Dendritic cell treated with granulocyte-macrophage colony-stimulating factor and Interleukin-4, amounts not matched to agents 40 ng/mL and 50 ng/mL, for 4 days (primary cell): ENCODE measurements at regions of chr6 and their contacts with region 1.

Region 1: GRCh38 chr6:28683944-28684538 is 158.4 kb downstream of the GPX5 start:
- H3K4me3 Mint-ChIP-seq: no peak overlapping the region
- H3K27ac Mint-ChIP-seq: no peak overlapping the region
- H3K4me1 Mint-ChIP-seq: no peaks in the 10 kb centered on the region
- H3K27me3 Mint-ChIP-seq: peaks cover 61% of the 10 kb centered on the region

Region 2: GRCh38 chr6:28707387-28708282 is 23.6 kb after region 1 on chr6:
- intact Hi-C with region 1: no loop called
- H3K4me3 Mint-ChIP-seq: no peak overlapping the region
- H3K27ac Mint-ChIP-seq: no peak overlapping the region
- H3K4me1 Mint-ChIP-seq: peaks cover 6% of the 10 kb centered on the region
- H3K27me3 Mint-ChIP-seq: peaks cover 47% of the 10 kb centered on the region

Region 3: DNA sequence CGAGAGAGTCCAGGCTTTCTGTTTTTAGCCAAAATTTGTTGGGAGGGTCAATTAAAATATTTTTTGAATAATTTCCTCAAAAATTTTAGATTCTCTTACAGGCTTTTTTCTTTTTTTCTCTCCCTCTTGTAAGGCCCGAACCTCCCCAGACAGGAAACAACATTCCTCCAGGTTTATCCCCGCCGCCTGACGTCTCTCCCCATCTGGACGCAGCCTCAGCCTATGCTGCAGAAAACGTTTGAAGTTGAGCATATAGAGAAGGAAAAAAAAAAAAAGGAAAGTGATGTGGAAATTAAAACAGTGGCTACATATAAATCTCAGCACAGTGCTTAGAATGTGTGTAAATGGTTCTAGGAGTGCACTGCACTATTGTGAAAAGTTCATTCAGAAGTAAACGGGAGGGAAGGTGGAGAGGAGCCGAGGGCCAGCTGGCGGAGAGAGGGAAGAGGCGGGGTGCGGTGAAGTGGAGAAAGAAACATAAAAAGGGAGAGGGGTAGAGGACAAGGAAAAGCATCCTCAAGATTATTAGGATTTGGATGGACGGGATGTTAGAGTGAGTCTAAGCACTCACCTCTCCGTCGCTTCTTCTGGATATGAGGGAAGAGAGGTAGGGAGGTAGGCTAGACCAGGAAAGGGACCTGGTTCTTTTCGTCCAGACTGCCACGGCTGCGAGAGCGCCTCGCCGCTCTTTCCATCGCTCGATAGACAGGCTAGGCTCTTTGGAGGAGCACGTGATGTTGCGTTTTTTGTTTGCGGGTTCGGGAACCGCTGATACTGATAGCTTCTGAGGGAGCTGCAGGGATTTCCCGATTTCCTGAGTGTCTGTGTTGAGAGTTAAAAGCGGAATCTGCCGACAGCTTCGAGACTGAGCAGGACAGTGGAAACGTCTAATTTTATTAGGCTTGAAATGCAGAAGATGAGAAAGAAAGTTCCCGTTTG is 141.0 kb after region 1 on chr6:
- intact Hi-C with region 1: no loop called
- H3K4me3 Mint-ChIP-seq: no peak overlapping the region
- H3K27ac Mint-ChIP-seq: no peak overlapping the region
- H3K4me1 Mint-ChIP-seq: peaks cover 9% of the 10 kb centered on the region
- H3K27me3 Mint-ChIP-seq: peaks cover 82% of the 10 kb centered on the region

Region 4: GRCh38 chr6:28838634-28839442 is 154.8 kb after region 1 on chr6:
- intact Hi-C with region 1: loop called (anchors 1 kb)
- H3K4me3 Mint-ChIP-seq: peak overlapping the region; percentile 83
- H3K27ac Mint-ChIP-seq: peak overlapping the region; percentile 70
- H3K4me1 Mint-ChIP-seq: peaks cover 22% of the 10 kb centered on the region
- H3K27me3 Mint-ChIP-seq: peaks cover 79% of the 10 kb centered on the region

Region 5: DNA sequence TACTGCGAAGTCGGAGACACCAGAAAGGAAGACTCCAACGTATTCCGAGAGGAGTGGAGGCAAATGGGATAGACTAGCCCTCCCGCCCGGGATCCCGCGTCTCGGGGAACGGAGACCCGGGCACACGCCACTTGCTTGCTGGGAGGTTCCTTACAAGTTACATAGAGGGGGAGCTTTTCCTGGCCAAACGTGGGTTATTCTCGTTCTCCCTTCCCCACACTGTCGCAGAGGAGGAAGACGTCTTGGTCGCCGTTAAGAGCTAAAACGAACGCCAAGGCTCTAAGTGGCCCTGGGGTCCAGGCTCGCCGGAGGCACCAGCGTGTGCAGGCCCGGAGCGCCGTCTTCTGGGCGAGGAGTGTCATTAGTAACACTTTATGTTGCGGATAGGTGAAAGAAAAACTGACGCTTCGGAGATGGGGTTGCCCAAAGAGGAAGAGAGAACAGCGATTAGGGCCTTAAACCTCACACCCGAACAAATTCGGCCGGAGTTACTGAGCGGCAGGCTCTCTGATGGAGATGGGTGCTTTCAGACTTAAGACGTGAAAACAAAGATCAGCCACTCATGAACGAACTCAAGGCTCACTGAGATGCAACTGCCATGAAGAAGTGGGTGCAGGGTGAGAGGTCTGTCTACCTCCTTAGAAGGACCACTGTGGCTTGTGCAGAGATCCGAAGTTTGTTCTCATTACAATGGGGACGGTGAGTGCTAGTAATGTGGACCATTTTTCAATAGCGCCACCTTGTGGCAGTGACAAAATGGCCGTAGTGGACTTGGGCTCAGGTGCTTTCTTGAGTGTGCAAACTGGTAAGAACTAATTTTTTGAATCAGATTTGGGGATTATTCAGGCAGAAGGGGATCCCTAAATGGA is 332.8 kb after region 1 on chr6:
- intact Hi-C with region 1: loop called (anchors 1 kb)
- H3K4me3 Mint-ChIP-seq: peak overlapping the region; percentile 80
- H3K27ac Mint-ChIP-seq: peak overlapping the region; percentile 46
- H3K4me1 Mint-ChIP-seq: peaks cover 14% of the 10 kb centered on the region
- H3K27me3 Mint-ChIP-seq: peaks cover 59% of the 10 kb centered on the region

Region 6: DNA sequence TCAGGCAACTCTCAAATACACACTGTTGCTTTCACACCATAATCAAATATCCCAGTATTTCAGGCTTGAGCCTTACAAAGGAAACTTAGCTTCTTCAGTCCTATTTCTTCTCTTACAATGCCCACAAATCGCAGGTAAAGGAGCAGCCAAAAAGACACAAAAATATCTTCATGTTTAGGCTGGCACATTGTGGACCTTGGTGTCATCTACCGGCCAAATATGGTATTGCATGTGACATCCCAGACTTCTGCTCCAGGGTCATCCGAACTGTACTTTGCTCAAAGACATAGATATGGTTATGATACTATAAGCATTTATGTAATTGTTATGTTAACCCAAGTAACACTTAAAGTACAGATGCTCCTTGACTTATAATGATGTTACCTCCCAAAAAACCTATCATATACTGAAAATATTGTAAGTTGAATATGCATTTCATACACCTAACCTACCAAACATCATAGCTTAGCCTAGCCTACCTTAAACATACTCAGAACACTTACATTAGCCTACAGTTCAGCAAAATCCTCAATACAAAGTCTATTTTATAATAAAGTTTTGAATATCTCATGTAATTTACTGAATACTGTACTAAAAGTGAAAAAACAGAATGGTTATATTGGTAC is 905.5 kb after region 1 on chr6:
- intact Hi-C with region 1: loop called (anchors 2 kb)
- H3K4me3 Mint-ChIP-seq: no peak overlapping the region
- H3K27ac Mint-ChIP-seq: no peak overlapping the region
- H3K4me1 Mint-ChIP-seq: peaks cover 7% of the 10 kb centered on the region
- H3K27me3 Mint-ChIP-seq: peaks cover 19% of the 10 kb centered on the region